H1 (cell line): ENCODE measurements at regions of chr12 and their contacts with region 1.

Region 1: DNA sequence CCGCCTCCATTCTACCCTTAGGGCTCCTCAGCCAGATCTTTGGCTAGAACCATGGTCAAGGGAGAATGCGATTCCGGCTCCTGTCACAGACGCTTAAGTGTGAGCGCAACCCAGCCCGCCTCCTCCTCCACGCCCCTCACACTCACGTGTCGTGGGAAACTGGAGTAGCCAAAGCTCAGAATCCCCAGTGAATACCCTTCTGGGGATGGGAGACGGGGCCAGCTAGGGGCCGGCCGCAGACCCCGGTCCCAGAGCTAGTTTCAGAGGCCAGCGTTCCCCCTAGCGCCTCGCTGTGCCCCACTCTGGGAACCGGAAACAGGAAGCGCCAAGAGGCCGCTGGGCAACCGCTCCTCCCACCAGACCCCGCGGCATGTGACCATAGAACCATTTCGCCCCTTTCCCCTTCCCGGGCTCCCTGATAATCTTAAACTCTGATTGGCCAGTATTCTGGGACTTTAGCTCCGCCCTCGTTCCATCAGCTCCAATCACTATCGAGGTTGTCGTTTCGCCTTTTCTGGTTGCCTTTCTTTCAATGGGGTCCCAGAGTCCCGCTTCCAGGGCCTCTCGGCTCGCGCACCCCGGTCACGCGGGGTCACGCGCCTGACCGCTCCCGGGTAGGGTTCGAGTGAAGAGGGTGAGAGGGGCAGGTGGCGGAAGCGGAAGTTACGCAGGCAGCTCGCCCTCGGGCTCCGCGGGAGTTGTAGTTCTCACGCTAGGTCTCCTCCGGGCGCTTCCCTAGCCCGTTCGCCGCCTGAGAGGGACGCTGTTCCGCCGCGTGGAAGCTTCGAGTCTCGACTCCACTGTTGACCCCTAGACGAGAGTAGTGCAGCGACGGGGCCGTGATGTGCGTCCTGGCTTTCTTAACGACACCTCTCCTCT is at the start of gene M6PR:
- DNase-seq: peak; percentile 79 to 94
- H3K4me3 ChIP-seq: peak within 1 kb of the TSS; percentile 61 to 93 (median 90)
- H3K27ac ChIP-seq: peak within 1 kb of the TSS; percentile 97
- H3K4me1 ChIP-seq: no peaks in the 10 kb centered on the region; a peak in 1 of 7 replicates
- H3K27me3 ChIP-seq: no peaks in the 10 kb centered on the region
- CTCF ChIP-seq: peak; percentile 66 to 68 (median 66)
- EP300 ChIP-seq: 0 out of 3 replicates have a peak, but pooled peaks of 1 of the 2 experiments have one; percentile 6
- POLR2A ChIP-seq: peak; percentile 54 to 84
- RAD21 ChIP-seq: peak; percentile 64 to 75
- total RNA-seq, gene M6PR: 106 and 115 TPM in 2 replicates

Region 2: DNA sequence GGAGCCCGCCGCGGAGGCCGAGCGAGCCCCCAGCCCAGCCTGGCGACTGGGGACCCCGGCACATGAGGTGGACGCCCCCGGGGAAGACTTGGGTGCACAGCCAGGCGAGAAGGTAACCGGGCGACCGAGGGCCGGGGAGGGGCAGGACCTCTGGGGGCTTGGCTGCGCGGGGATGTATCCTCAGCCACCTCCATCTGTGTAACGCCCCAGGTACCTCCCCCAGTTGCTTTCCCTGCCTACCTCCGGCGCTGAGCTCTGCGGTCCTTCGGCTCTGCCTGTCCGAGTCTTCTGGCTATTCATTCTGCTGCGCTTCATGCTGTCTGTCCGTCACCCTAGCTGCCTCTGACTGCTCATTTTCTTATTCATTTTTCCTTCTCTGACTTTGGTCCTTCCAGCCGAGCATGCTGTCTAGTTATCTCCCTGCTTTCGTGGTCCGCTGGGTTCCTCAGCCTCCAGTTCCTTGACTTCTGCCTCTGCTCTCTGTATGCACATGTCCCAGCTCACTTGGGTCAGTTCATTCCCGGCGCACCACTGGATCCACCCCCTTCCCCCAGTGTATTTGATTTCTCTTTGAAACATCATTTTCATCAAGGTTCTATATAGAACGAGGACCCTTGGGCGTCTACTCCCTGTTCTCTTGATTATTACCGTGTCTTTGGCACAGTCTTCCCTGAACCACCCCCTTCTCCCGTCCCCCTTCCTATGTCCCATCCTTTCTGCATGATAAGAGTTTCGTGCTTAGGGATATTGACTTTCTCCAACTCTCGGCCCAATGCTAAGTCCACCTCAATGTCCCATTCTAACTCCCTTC is 34.7 kb before region 1 on chr12:
- CTCF ChIA-PET with region 1: no interaction called
- POLR2A ChIA-PET with region 1: interaction called, 311 read pairs
- DNase-seq: peak in 1 of 2 experiments; percentile 76
- H3K4me3 ChIP-seq: peak overlapping the region; percentile 91 to 99 (median 98)
- H3K27ac ChIP-seq: peak overlapping the region; percentile 65; the same call in 1 of the 2 replicates
- H3K4me1 ChIP-seq: peaks cover 0 to 33% (median 11%) of the 10 kb centered on the region in 4 experiments; a peak in 5 of 7 replicates
- H3K27me3 ChIP-seq: no peaks in the 10 kb centered on the region
- CTCF ChIP-seq: no peak
- EP300 ChIP-seq: no peak
- POLR2A ChIP-seq: 0 out of 3 replicates have a peak, but pooled peaks of 1 of the 2 experiments have one; percentile 42
- RAD21 ChIP-seq: no peak

Region 3: GRCh38 chr12:8936735-8937134 is 12.8 kb before region 1 on chr12:
- CTCF ChIA-PET with region 1: interaction called, 5 read pairs
- POLR2A ChIA-PET with region 1: interaction called, 64 read pairs
- DNase-seq: no peak
- H3K4me3 ChIP-seq: no peak overlapping the region
- H3K27ac ChIP-seq: no peak overlapping the region
- H3K4me1 ChIP-seq: no peaks in the 10 kb centered on the region
- H3K27me3 ChIP-seq: no peaks in the 10 kb centered on the region
- CTCF ChIP-seq: no peak
- EP300 ChIP-seq: no peak
- POLR2A ChIP-seq: peak in 1 of 2 experiments; percentile 56; a peak in 1 of 3 replicates
- RAD21 ChIP-seq: no peak

Region 4: DNA sequence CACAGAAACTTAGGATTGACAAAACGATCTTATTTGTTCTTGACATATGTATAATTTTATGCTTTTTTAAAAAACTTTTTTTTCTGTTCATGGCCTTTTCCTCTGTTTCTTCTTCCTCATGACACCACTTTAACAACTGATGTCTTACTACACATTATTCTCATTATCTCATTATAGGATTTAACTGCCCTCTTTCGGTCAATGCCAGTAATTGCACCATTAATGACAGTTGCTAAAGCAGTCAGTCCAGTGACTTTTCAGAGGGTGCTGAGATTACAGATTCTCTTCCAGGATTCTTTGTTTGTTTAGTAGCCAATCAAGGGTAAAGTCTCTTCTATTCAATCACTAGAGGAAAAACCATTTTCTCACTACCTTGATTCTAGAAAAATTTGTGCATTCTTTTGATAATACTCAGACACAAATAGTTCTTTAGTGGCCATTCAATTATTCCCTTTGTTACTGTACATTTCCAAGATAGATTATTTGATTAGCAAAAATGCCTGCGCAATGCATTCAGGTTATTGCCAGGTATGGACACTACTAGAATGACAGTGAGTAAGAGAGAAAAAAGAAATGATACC is 89.9 kb after region 1 on chr12:
- CTCF ChIA-PET with region 1: interaction called, 119 read pairs
- POLR2A ChIA-PET with region 1: interaction called, 8 read pairs
- DNase-seq: no peak
- H3K4me3 ChIP-seq: no peak overlapping the region
- H3K27ac ChIP-seq: no peak overlapping the region
- H3K4me1 ChIP-seq: no peaks in the 10 kb centered on the region
- H3K27me3 ChIP-seq: no peaks in the 10 kb centered on the region
- CTCF ChIP-seq: peak in 2 of 3 experiments; percentile 52 to 74; a peak in 2 of 4 replicates
- EP300 ChIP-seq: no peak
- POLR2A ChIP-seq: no peak
- RAD21 ChIP-seq: peak; percentile 79

Region 5: DNA sequence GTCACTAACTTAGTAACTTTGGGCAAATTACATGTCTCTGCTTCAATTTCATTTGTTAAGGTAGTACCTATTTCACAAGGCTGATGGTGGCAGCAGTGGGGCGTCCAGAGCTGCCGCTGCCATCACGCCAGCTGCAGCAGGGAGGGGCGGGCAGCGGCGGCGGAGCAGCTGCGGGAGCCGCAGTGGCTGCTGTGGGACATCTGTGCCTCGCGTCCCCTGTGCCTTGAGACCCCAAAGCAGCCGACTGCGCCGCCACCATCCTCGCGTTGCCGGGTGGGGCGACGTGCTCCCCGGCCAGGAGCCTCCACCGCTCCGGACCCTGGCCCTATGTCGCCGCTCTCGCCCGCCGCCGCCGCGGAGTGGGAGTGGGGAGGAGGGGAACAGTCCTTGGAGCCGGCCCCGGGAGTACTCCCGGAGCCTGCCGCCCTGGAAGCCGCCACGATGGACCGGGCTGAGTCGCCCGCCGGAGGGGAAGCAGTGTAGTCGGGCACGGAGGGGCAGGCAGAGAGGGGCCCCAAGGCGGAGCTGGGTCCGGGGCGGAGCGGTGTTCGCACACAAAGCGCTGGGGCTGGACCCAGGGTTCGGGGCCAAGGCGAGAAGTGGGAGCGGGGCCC is 114.7 kb after region 1 on chr12:
- CTCF ChIA-PET with region 1: interaction called, 3 read pairs
- POLR2A ChIA-PET with region 1: interaction called, 12 read pairs
- DNase-seq: peak in 1 of 2 experiments; percentile 9
- H3K4me3 ChIP-seq: peak overlapping the region; percentile 52 to 83 (median 81)
- H3K27ac ChIP-seq: peak overlapping the region; percentile 80; the same call in 1 of the 2 replicates
- H3K4me1 ChIP-seq: peaks cover 0 to 9% (median 6%) of the 10 kb centered on the region in 4 experiments; a peak in 5 of 7 replicates
- H3K27me3 ChIP-seq: no peaks in the 10 kb centered on the region
- CTCF ChIP-seq: peak; percentile 43 to 54 (median 48)
- EP300 ChIP-seq: no peak
- POLR2A ChIP-seq: no peak; a peak in 1 of 3 replicates
- RAD21 ChIP-seq: peak; percentile 56 to 72